Transverse colon (tissue), 4 donors: ENCODE measurements at regions of chr2 and their contacts with region 1.

Region 1: DNA sequence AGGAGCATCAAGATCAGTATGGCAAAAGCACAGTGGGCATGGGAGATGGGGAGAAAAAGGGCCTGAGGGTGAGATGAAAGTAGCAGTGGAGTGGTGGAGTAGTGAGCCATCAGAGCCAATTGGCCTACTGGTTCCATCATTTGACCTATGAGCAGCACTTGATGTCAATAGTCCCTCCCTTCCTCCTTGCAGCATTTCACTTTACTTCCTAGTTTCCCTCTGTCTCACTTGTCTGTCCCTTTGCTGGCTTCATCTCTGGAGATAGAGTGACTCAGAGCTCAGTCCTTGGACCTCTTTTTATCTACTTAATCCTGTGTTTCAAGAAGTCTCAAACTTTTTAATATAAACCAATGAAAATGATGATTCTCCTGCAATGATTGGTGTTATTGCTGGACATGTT is 32.1 kb downstream of the FBXO48 start:
- DNase-seq: no peak
- H3K4me3 ChIP-seq: no peak overlapping the region
- H3K27ac ChIP-seq: no peak overlapping the region
- H3K4me1 ChIP-seq: peaks cover 0 to 9% (median under 1%) of the 10 kb centered on the region in 4 donors
- H3K27me3 ChIP-seq: no peaks in the 10 kb centered on the region
- CTCF ChIP-seq: no peak
- EP300 ChIP-seq: no peak
- POLR2A ChIP-seq: no peak

Region 2: GRCh38 chr2:68379184-68379708 is 55.7 kb before region 1 on chr2:
- in situ Hi-C with region 1: loop called in 1 of 4 experiments (anchors 10 kb)
- intact Hi-C with region 1: no loop called
- DNase-seq: no peak
- H3K4me3 ChIP-seq: no peak overlapping the region
- H3K27ac ChIP-seq: no peak overlapping the region
- H3K4me1 ChIP-seq: no peaks in the 10 kb centered on the region
- H3K27me3 ChIP-seq: no peaks in the 10 kb centered on the region
- CTCF ChIP-seq: no peak
- EP300 ChIP-seq: no peak
- POLR2A ChIP-seq: no peak

Region 3: GRCh38 chr2:68506170-68506569 is 71.2 kb after region 1 on chr2:
- in situ Hi-C with region 1: no loop called
- intact Hi-C with region 1: no loop called
- DNase-seq: no peak
- H3K4me3 ChIP-seq: no peak overlapping the region
- H3K27ac ChIP-seq: no peak overlapping the region
- H3K4me1 ChIP-seq: peaks cover 0 to 7% (median 0%) of the 10 kb centered on the region in 4 donors
- H3K27me3 ChIP-seq: no peaks in the 10 kb centered on the region
- CTCF ChIP-seq: no peak
- EP300 ChIP-seq: no peak
- POLR2A ChIP-seq: no peak